B cell (primary cell): ENCODE measurements at regions of chr5 and their contacts with region 1.

Region 1: GRCh38 chr5:12023614-12024241 is 119.5 kb upstream of the CTNND2 start:
- DNase-seq: peak; percentile 10
- ATAC-seq: no peak
- H3K4me3 ChIP-seq: no peak overlapping the region
- H3K4me3 Mint-ChIP-seq: no peak overlapping the region
- H3K27ac ChIP-seq: no peak overlapping the region
- H3K27ac Mint-ChIP-seq: no peak overlapping the region
- H3K4me1 ChIP-seq: no peaks in the 10 kb centered on the region
- H3K4me1 Mint-ChIP-seq: no peaks in the 10 kb centered on the region
- H3K27me3 ChIP-seq: no peaks in the 10 kb centered on the region
- H3K27me3 Mint-ChIP-seq: no peaks in the 10 kb centered on the region
- CTCF ChIP-seq: peak; percentile 68

Region 2: DNA sequence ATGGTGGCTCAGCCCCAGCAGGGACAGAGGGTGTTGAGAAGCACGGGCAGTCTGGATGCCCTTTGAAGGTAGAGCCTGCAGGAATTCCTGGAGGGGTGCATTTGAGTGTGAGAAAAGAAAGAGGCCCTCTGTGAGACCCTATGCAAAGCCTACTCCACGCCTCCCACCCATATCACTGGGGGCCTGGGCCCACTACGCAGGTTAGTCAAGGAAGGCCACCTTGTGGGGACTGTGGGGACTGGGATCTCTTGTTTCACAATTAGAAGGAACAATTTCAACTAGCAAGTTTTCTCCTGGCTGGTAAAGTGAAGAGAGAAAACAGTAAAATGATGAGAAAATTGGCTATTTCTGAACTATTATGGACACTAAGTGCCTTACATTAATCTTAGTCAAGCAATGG is 776.5 kb before region 1 on chr5:
- CTCF ChIA-PET with region 1: no interaction called
- POLR2A ChIA-PET with region 1: no interaction called
- intact Hi-C with region 1: no loop called
- DNase-seq: no peak
- ATAC-seq: no peak
- H3K4me3 ChIP-seq: no peak overlapping the region
- H3K4me3 Mint-ChIP-seq: no peak overlapping the region
- H3K27ac ChIP-seq: no peak overlapping the region
- H3K27ac Mint-ChIP-seq: no peak overlapping the region
- H3K4me1 ChIP-seq: no peaks in the 10 kb centered on the region
- H3K4me1 Mint-ChIP-seq: no peaks in the 10 kb centered on the region
- H3K27me3 ChIP-seq: no peaks in the 10 kb centered on the region
- H3K27me3 Mint-ChIP-seq: no peaks in the 10 kb centered on the region
- CTCF ChIP-seq: no peak

Region 3: DNA sequence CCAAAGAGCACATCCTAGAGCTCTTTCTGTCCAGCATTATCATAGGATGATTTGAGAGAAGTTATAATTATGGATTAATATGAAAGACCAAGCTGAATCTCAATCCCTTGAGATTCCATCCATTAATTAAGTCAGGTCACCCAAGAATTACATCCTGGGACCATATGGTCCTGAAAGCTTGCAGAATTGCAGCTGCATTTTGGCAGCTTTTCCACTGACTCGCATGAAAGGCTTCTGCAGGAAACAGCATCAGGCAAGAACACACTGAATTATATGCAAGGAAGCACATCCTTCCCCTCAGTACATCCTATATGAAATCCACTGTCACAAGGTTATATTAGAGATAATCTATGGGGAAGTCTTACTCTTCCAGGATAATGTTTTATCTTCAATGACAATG is 10.4 kb before region 1 on chr5:
- CTCF ChIA-PET with region 1: interaction called, 10 read pairs
- POLR2A ChIA-PET with region 1: no interaction called
- intact Hi-C with region 1: no loop called
- DNase-seq: no peak
- ATAC-seq: no peak
- H3K4me3 ChIP-seq: no peak overlapping the region
- H3K4me3 Mint-ChIP-seq: no peak overlapping the region
- H3K27ac ChIP-seq: no peak overlapping the region
- H3K27ac Mint-ChIP-seq: no peak overlapping the region
- H3K4me1 ChIP-seq: no peaks in the 10 kb centered on the region
- H3K4me1 Mint-ChIP-seq: no peaks in the 10 kb centered on the region
- H3K27me3 ChIP-seq: no peaks in the 10 kb centered on the region
- H3K27me3 Mint-ChIP-seq: no peaks in the 10 kb centered on the region
- CTCF ChIP-seq: no peak